Common myeloid progenitor, CD34-positive (primary cell): ENCODE measurements at regions of chr3 and their contacts with region 1.

Region 1: DNA sequence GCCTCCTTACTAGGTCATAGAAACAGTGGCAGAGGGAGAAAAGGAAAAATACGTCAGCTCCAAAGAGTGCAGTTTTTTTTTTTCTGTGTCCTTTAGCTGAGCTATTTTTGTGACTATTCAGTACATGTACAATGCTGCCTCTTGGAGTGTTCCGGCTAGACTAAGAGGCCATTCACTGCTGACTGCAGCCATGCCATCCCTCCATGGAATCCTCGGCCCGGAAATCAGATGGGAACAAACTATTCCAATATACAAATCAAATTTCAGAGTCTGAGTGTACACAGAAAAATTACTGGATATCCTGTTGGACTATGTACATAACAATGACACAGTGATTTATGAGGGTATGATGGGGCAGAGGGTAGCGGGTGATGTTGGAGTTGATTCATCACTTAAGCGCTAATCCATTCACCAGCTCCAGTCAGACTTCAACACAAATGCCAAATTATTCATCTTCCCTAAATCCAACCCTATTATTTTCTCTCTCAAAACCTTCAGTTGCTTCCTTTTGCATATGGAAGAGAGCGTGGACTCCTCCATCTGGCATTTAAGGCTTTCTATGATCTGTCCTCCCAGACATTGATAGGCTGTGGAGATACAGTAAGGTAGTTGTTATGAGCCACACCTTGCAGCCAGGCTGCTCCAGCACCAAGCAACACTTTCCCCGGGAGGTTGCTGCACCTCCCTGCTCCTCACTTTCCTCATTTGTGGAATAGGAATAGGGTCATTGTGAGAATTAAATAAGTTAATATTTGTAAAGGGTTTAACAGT is 109.1 kb downstream of the LPP start:
- DNase-seq: no peak
- H3K4me3 ChIP-seq: no peak overlapping the region
- H3K27ac ChIP-seq: no peak overlapping the region
- H3K4me1 ChIP-seq: no peaks in the 10 kb centered on the region
- H3K27me3 ChIP-seq: no peaks in the 10 kb centered on the region

Region 2: DNA sequence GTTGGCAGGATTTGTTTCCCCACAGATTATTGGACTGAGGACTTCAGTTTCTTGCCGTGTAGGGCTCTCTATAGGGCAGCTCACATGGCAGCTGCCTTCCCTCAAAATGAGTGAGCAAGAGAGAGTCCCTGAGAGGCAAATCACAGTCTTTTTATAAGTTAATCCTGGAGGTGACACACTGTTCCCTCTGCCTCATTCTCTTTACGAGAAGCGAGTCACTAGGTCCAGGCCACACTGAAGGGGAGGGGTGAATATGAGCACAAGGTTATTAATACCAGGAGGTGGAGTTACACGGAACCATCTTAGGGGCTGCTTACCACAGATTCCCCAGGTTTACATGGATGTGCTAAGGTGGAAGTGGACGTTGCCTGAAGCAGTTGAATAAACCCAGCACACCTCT is 32.1 kb before region 1 on chr3:
- CTCF ChIA-PET with region 1: no interaction called
- POLR2A ChIA-PET with region 1: no interaction called
- DNase-seq: no peak
- H3K4me3 ChIP-seq: no peak overlapping the region
- H3K27ac ChIP-seq: no peak overlapping the region
- H3K4me1 ChIP-seq: peaks cover 0 to 9% (median 6%) of the 10 kb centered on the region in 4 experiments
- H3K27me3 ChIP-seq: no peaks in the 10 kb centered on the region

Region 3: GRCh38 chr3:188283347-188283746 is 20.2 kb after region 1 on chr3:
- CTCF ChIA-PET with region 1: interaction called, 3 read pairs
- POLR2A ChIA-PET with region 1: interaction called, 10 read pairs
- DNase-seq: no peak
- H3K4me3 ChIP-seq: no peak overlapping the region
- H3K27ac ChIP-seq: no peak overlapping the region
- H3K4me1 ChIP-seq: no peaks in the 10 kb centered on the region
- H3K27me3 ChIP-seq: no peaks in the 10 kb centered on the region